ENCODE measurements at regions of chr6 and their contacts with region 1.

Region 1: GRCh38 chr6:3742426-3743344 is 8.8 kb downstream of the PXDC1 start:
- DNase-seq: no peak
- ATAC-seq: peak; percentile 87
- H3K4me3 ChIP-seq: no peak overlapping the region
- H3K27ac ChIP-seq: no peak overlapping the region
- H3K4me1 ChIP-seq: peaks cover 8% of the 10 kb centered on the region
- H3K27me3 ChIP-seq: no peaks in the 10 kb centered on the region
- CTCF ChIP-seq: peak; percentile 81 to 98 (median 83); a peak in 5 of 6 replicates
- EP300 ChIP-seq: no peak
- POLR2A ChIP-seq: no peak
- RAD21 ChIP-seq: peak; percentile 95

Region 2: GRCh38 chr6:3887150-3887700 is 144.5 kb after region 1 on chr6:
- CTCF ChIA-PET with region 1: interaction called, 11 read pairs
- POLR2A ChIA-PET with region 1: no interaction called
- RAD21 ChIA-PET with region 1: interaction called, 4 read pairs
- SMC1A ChIA-PET with region 1: interaction called, 3 read pairs
- in situ Hi-C with region 1: no loop called
- intact Hi-C with region 1: loop called (anchors 1 kb)
- DNase-seq: peak; percentile 1
- ATAC-seq: no peak
- H3K4me3 ChIP-seq: no peak overlapping the region
- H3K27ac ChIP-seq: no peak overlapping the region
- H3K4me1 ChIP-seq: no peaks in the 10 kb centered on the region
- H3K27me3 ChIP-seq: no peaks in the 10 kb centered on the region; a peak in 1 of 4 replicates
- CTCF ChIP-seq: peak; percentile 29 to 39 (median 35); a peak in 4 of 6 replicates
- EP300 ChIP-seq: no peak
- POLR2A ChIP-seq: no peak
- RAD21 ChIP-seq: peak; percentile 51

Region 3: GRCh38 chr6:3929281-3929798 is 186.7 kb after region 1 on chr6:
- CTCF ChIA-PET with region 1: interaction called, 4 read pairs
- POLR2A ChIA-PET with region 1: no interaction called
- RAD21 ChIA-PET with region 1: no interaction called
- SMC1A ChIA-PET with region 1: interaction called, 3 read pairs
- in situ Hi-C with region 1: no loop called
- intact Hi-C with region 1: loop called (anchors 2 kb)
- DNase-seq: no peak
- ATAC-seq: no peak
- H3K4me3 ChIP-seq: no peak overlapping the region
- H3K27ac ChIP-seq: no peak overlapping the region
- H3K4me1 ChIP-seq: no peaks in the 10 kb centered on the region
- H3K27me3 ChIP-seq: no peaks in the 10 kb centered on the region; a peak in 1 of 4 replicates
- CTCF ChIP-seq: no peak
- EP300 ChIP-seq: no peak
- POLR2A ChIP-seq: no peak
- RAD21 ChIP-seq: no peak

Region 4: GRCh38 chr6:3977875-3978711 is 235.4 kb after region 1 on chr6:
- CTCF ChIA-PET with region 1: interaction called, 74 read pairs
- POLR2A ChIA-PET with region 1: no interaction called
- RAD21 ChIA-PET with region 1: interaction called, 16 read pairs
- SMC1A ChIA-PET with region 1: interaction called, 22 read pairs
- in situ Hi-C with region 1: no loop called
- intact Hi-C with region 1: loop called (anchors 1 kb)
- DNase-seq: peak; percentile 38
- ATAC-seq: peak; percentile 97
- H3K4me3 ChIP-seq: no peak overlapping the region
- H3K27ac ChIP-seq: no peak overlapping the region
- H3K4me1 ChIP-seq: no peaks in the 10 kb centered on the region
- H3K27me3 ChIP-seq: no peaks in the 10 kb centered on the region
- CTCF ChIP-seq: peak; percentile 59 to 71 (median 64); a peak in 5 of 6 replicates
- EP300 ChIP-seq: no peak
- POLR2A ChIP-seq: no peak
- RAD21 ChIP-seq: peak; percentile 50

Region 5: GRCh38 chr6:3990692-3991501 is 248.2 kb after region 1 on chr6:
- CTCF ChIA-PET with region 1: interaction called, 33 read pairs
- POLR2A ChIA-PET with region 1: no interaction called
- RAD21 ChIA-PET with region 1: interaction called, 4 read pairs
- SMC1A ChIA-PET with region 1: interaction called, 17 read pairs
- in situ Hi-C with region 1: loop called (anchors 5 kb)
- intact Hi-C with region 1: loop called (anchors 1 kb)
- DNase-seq: no peak
- ATAC-seq: peak; percentile 97
- H3K4me3 ChIP-seq: no peak overlapping the region
- H3K27ac ChIP-seq: no peak overlapping the region
- H3K4me1 ChIP-seq: no peaks in the 10 kb centered on the region
- H3K27me3 ChIP-seq: no peaks in the 10 kb centered on the region
- CTCF ChIP-seq: peak; percentile 82 to 88 (median 85)
- EP300 ChIP-seq: no peak
- POLR2A ChIP-seq: no peak
- RAD21 ChIP-seq: peak; percentile 81

Region 6: DNA sequence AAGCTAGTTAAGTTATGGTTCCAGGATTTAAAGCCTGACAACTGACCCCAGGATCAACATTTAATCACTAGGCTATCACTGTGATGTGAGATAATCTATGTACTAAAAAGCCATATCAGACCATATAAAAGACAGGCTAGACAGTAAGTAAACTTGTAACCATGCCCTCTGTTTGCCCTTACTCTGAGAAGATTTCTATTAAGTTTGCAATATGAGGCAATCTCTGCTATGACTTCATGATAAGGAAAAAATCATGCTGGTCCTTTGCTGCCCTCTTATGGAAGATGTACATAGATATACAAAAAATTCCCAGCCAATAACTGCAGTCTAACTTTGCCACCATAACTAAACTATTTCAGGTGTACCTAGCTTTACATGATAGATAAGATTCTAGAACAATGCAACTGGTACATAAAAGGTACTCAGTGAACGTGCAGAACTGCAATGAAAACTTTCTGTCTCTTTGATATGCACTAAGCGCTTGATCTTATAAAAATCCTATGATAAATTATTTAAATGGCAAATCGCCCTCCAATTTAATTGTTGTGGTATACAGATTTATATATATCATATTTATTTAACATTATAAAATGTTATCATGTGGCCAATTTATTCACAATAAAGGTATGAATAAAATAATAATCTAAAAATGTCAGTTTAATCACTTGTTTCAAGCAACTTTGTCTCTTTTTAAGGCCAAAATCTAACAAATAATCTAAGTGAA is 265.8 kb after region 1 on chr6:
- CTCF ChIA-PET with region 1: interaction called, 17 read pairs
- POLR2A ChIA-PET with region 1: no interaction called
- RAD21 ChIA-PET with region 1: interaction called, 3 read pairs
- SMC1A ChIA-PET with region 1: interaction called, 12 read pairs
- in situ Hi-C with region 1: no loop called
- intact Hi-C with region 1: loop called (anchors 5 kb)
- DNase-seq: no peak
- ATAC-seq: peak; percentile 68
- H3K4me3 ChIP-seq: no peak overlapping the region
- H3K27ac ChIP-seq: no peak overlapping the region
- H3K4me1 ChIP-seq: peaks cover 5% of the 10 kb centered on the region; the same call in 1 of the 2 replicates
- H3K27me3 ChIP-seq: no peaks in the 10 kb centered on the region
- CTCF ChIP-seq: peak; percentile 38 to 61 (median 43); a peak in 5 of 6 replicates
- EP300 ChIP-seq: no peak
- POLR2A ChIP-seq: no peak
- RAD21 ChIP-seq: peak; percentile 56

Region 7: GRCh38 chr6:4210629-4211423 is 468.1 kb after region 1 on chr6:
- CTCF ChIA-PET with region 1: interaction called, 17 read pairs
- POLR2A ChIA-PET with region 1: no interaction called
- RAD21 ChIA-PET with region 1: interaction called, 5 read pairs
- SMC1A ChIA-PET with region 1: interaction called, 6 read pairs
- in situ Hi-C with region 1: no loop called
- intact Hi-C with region 1: loop called (anchors 10 kb)
- DNase-seq: no peak
- ATAC-seq: peak; percentile 93
- H3K4me3 ChIP-seq: no peak overlapping the region
- H3K27ac ChIP-seq: no peak overlapping the region
- H3K4me1 ChIP-seq: no peaks in the 10 kb centered on the region
- H3K27me3 ChIP-seq: no peaks in the 10 kb centered on the region
- CTCF ChIP-seq: peak; percentile 62 to 73 (median 69)
- EP300 ChIP-seq: no peak
- POLR2A ChIP-seq: no peak
- RAD21 ChIP-seq: peak; percentile 64